ENCODE measurements at regions of chr18 and their contacts with region 1.

Region 1: GRCh38 chr18:48538531-48539405 is at the start of gene CTIF:
- DNase-seq: peak; percentile 96 to 97
- ATAC-seq: peak; percentile 73 to 74
- H3K4me3 ChIP-seq: peak within 1 kb of the TSS; percentile 74 to 87 (median 84)
- H3K27ac ChIP-seq: peak within 1 kb of the TSS; percentile 89 to 98 (median 94)
- H3K4me1 ChIP-seq: peaks cover 14 to 21% of the 10 kb centered on the region in 2 donors
- H3K27me3 ChIP-seq: no peaks in the 10 kb centered on the region
- CTCF ChIP-seq: no peak
- POLR2A ChIP-seq: peak in 1 of 2 donors; percentile 44
- total RNA-seq, gene CTIF: 20.2 to 35.4 (median 23.1) TPM

Region 2: GRCh38 chr18:48161191-48161910 is 377.4 kb before region 1 on chr18:
- in situ Hi-C with region 1: no loop called
- intact Hi-C with region 1: loop called (anchors 5 kb)
- DNase-seq: peak; percentile 48 to 67
- ATAC-seq: peak; percentile 91 to 92
- H3K4me3 ChIP-seq: peak overlapping the region; percentile 50 to 83 (median 67)
- H3K27ac ChIP-seq: peak overlapping the region; percentile 47 to 80 (median 65)
- H3K4me1 ChIP-seq: peaks cover 0 to 4% of the 10 kb centered on the region in 2 donors
- H3K27me3 ChIP-seq: no peaks in the 10 kb centered on the region
- CTCF ChIP-seq: no peak
- POLR2A ChIP-seq: peak in 1 of 2 donors; percentile 14

Region 3: DNA sequence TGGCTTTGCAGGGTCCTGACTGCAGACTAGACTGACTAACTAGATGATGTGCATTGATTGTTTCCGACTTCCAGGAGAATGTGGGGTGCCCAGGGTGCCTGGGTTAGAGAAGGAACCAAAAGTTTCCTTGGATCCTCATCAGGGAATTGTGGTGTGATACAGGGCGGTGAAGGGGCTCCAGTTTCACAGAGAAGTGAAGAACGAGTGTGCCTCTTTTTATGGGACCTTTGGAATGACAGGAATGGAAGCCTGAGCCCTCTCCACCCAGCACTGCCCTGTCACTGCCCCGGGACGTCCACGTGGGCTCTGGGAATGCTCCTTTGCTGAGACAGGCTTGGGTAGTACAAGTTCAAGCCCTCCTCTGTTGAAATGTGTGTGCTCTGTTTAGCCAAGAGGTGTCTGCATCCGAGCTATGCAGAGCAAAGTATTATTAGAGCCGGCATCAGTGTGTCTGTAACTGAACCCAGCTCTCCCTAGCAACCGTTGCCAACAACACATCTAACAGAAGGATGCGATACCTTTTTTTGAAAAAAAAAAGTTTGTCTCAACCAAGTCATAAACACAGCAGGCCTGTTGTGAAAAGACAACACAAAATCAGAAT is 228.4 kb after region 1 on chr18:
- in situ Hi-C with region 1: no loop called
- intact Hi-C with region 1: loop called (anchors 10 kb)
- DNase-seq: peak; percentile 71 to 91
- ATAC-seq: peak; percentile 76 to 82
- H3K4me3 ChIP-seq: no peak overlapping the region
- H3K27ac ChIP-seq: peak overlapping the region; percentile 78 to 91 (median 88)
- H3K4me1 ChIP-seq: peaks cover 63 to 87% of the 10 kb centered on the region in 2 donors
- H3K27me3 ChIP-seq: no peaks in the 10 kb centered on the region
- CTCF ChIP-seq: no peak
- POLR2A ChIP-seq: peak; percentile 59 to 60

Region 4: DNA sequence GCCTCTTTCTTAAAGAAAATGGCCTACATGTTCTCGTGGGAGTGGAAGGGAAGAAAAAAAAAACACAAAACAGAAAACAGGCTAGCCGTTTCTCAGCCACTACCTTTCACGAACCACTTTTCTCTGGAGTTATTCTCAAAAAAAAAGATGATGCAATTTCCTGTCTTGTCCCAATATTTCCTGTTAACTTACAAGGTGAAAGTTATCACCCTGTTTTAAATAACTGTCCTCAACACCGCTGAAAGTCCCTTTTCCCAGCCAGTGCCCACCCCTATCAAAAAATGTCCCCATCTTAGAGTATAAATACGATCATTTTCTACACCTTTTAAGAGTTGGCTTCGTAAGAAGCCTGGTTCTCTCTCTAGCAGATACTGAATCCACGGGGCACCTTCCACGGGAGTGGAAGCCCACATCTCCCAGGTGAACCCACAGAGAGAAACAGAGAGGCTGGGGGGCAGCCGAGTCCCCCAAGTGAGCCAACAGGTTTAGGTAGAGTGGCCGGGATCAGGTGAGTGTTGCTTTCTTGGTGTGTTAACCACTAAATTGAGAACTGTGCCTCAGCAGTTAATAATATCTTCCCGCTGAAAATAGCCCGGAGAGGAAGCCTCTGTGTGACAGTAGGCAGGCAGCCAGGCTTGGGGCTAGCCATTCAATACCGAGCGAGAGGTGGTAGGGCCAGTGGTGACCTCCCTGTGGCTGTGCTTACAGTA is 396.1 kb after region 1 on chr18:
- in situ Hi-C with region 1: loop called in 1 of 4 experiments (anchors 25 kb)
- intact Hi-C with region 1: loop called (anchors 5 kb)
- DNase-seq: peak; percentile 90 to 97
- ATAC-seq: peak; percentile 94 to 96
- H3K4me3 ChIP-seq: peak overlapping the region; percentile 19 to 39 (median 36)
- H3K27ac ChIP-seq: peak overlapping the region; percentile 88 to 93 (median 89)
- H3K4me1 ChIP-seq: peaks cover 90 to 95% of the 10 kb centered on the region in 2 donors
- H3K27me3 ChIP-seq: no peaks in the 10 kb centered on the region
- CTCF ChIP-seq: no peak
- POLR2A ChIP-seq: peak; percentile 56 to 66

Region 5: DNA sequence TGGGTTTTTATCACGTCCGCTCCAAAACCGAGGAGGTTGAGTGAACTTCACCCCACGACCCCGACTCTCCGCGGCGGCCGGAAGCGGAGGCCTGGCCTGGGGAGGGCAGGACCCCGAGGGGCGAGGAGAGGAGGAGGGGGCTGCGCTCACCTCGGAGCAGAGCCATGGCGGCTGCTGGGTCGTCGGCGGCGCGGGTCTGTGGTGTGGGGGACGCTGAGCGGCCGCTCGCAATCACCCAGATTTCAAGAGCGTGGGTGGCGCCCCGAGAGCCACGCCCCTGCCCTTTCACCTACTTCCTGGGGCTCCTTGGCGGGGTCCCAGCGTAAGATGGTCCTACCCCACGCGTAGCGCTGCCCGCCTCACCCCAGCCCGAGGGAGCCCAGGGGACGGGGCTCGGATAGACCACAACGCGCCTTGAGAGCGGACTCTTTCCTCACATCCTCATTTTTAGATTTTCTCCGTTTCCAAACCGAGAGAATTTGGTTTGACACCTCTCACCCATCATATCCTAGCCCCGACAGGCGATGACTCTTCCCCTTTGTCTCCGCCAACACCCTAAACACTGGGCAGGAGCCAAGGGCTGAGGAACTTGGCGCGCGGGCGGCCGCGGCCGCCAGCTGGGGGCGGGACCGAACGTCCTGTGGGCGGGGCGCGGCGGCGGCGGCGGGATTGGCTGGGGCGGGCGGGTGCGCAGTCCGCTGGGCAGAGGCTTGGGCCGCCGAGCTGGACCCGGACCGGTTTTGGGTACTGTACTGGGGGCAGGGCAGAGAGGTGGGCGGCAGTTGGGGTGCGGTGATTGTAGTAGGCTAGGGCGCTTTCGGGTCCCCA is 1274.8 kb after region 1 on chr18 and contains the start of gene ACAA2:
- in situ Hi-C with region 1: no loop called
- intact Hi-C with region 1: loop called (anchors 10 kb)
- DNase-seq: peak; percentile 78 to 82
- ATAC-seq: peak; percentile 90 to 91
- H3K4me3 ChIP-seq: peak within 1 kb of the TSS; percentile 88 to 95 (median 92)
- H3K27ac ChIP-seq: peak within 1 kb of the TSS; percentile 93 to 99 (median 96)
- H3K4me1 ChIP-seq: peaks cover 14 to 20% of the 10 kb centered on the region in 2 donors
- H3K27me3 ChIP-seq: no peaks in the 10 kb centered on the region
- CTCF ChIP-seq: no peak
- POLR2A ChIP-seq: peak; percentile 38 to 65
- total RNA-seq, gene ACAA2: 73.7 to 95.7 (median 79.6) TPM

Region 6: DNA sequence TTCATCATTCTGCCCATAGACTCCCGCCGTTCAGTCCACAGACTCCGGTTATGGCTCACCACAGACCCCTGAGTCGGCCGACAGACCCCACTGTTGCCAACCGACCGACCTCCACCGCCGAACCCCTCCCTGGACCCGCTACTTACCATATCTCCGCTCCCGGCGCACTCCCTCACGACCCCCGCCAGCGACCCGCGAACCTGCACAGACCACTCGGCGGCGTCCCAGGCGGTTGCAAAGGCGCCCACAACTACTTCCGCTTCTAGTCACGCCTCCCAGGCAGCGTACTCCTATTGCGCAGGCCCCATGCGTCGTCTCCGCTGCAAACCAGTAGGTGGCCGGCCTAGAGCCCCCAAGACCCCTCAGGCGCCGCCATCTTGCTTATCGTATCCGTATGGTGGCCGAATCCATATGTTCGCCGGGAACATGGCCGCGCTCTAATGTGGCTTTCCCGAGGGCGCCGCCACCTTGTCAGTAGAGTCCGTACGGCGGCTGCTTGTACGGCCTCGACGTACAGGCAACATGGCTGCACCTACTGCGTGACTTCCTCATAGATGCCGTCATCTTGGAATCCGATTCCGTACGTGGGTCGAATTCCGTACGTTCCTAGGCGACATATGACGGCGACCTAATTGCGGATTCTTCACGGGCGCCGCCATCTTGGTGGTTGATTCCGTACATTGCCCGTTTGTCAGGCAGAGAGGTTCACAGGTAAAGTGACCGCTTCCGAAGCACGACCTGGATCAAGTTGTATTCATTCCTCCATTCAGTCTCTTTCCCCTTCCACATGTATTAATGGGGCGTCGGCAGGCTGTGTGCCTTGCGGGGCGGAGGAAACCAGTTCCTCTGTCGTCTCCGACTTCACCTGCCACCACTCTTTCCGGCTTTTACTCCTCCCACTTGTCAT is 1748.9 kb after region 1 on chr18 and contains the start of gene CXXC1:
- in situ Hi-C with region 1: no loop called
- intact Hi-C with region 1: loop called (anchors 10 kb)
- DNase-seq: peak; percentile 95
- ATAC-seq: peak; percentile 98
- H3K4me3 ChIP-seq: peak within 1 kb of the TSS; percentile 73 to 97 (median 84)
- H3K27ac ChIP-seq: peak within 1 kb of the TSS; percentile 82 to 93 (median 91)
- H3K4me1 ChIP-seq: no peaks in the 10 kb centered on the region
- H3K27me3 ChIP-seq: no peaks in the 10 kb centered on the region
- CTCF ChIP-seq: peak; percentile 46 to 75 (median 61)
- POLR2A ChIP-seq: peak in 1 of 2 donors; percentile 46
- total RNA-seq, gene CXXC1: 21.1 to 32.0 (median 27.3) TPM

Measured in gastrocnemius medialis (tissue), 4 donors.